Naive thymus-derived CD8-positive, alpha-beta T cell (primary cell): ENCODE measurements at regions of chr10 and their contacts with region 1.

Region 1: GRCh38 chr10:91923371-91924211 is at the start of gene BTAF1:
- DNase-seq: peak; percentile 85 to 96 (median 90)
- ATAC-seq: peak; percentile 93
- H3K4me3 Mint-ChIP-seq: peak within 1 kb of the TSS; percentile 88 to 100 (median 94)
- H3K27ac Mint-ChIP-seq: peak within 1 kb of the TSS; percentile 95 to 100 (median 98)
- H3K4me1 Mint-ChIP-seq: peaks cover 18 to 48% (median 41%) of the 10 kb centered on the region in 4 donors
- H3K27me3 Mint-ChIP-seq: peaks cover 1 to 10% (median 4%) of the 10 kb centered on the region in 5 donors
- polyA plus RNA-seq, gene BTAF1: 7.9 to 9.1 (median 8.6) TPM

Region 2: DNA sequence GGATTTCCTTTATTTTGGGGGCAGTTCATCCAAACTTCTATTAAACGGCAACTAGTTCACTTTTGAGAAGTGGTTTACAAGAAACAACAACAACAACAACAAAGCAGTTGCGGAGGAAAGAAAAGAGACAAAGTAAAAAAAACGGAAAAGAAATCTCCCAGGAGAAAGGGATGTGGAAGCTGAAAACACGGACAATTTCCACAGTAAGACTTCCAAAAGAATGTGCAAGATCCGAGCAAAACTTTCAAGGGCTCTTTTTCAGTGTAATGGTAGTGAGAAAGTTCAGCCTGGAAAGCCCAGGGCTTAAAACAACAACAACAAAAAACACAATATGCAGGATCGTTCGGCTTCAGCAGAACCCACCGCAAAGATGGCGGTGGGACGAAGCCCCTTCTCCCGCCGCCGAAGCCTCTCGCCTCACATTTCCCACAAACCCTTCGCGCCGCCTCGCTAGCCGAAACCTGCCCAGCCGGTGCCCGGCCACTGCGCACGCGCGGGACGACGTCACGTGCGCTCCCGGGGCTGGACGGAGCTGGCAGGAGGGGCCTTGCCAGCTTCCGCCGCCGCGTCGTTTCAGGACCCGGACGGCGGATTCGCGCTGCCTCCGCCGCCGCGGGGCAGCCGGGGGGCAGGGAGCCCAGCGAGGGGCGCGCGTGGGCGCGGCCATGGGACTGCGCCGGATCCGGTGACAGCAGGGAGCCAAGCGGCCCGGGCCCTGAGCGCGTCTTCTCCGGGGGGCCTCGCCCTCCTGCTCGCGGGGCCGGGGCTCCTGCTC is 125.5 kb before region 1 on chr10 and contains the start of gene TNKS2:
- POLR2A ChIA-PET with region 1: interaction called, 18 read pairs
- DNase-seq: peak; percentile 84 to 95 (median 92)
- ATAC-seq: peak; percentile 80
- H3K4me3 Mint-ChIP-seq: peak within 1 kb of the TSS; percentile 93 to 100 (median 98)
- H3K27ac Mint-ChIP-seq: peak within 1 kb of the TSS; percentile 92 to 99 (median 98)
- H3K4me1 Mint-ChIP-seq: peaks cover 31 to 68% (median 62%) of the 10 kb centered on the region in 4 donors
- H3K27me3 Mint-ChIP-seq: no peaks in the 10 kb centered on the region
- polyA plus RNA-seq, gene TNKS2: 15.2 to 25.4 (median 18.6) TPM

Region 3: DNA sequence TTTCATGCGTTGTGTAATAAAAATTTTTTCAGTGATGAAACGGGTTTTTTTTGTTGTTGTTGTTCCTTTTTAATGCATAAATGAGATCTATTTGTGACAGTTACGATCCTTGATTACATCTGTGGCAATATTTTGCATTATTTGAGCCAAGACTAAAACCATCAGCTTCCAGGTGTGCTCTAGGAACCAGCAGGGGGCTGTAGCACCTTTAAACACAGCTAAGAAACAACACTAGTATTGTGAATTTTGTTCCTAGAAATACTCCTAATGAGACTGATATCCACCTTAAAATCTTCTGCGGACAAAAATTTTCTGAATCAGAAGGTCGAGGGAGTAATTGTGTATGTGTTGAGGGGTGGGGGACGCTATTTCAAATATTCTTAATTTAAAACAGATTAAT is 67.0 kb before region 1 on chr10:
- POLR2A ChIA-PET with region 1: no interaction called
- DNase-seq: no peak
- ATAC-seq: no peak
- H3K4me3 Mint-ChIP-seq: no peak overlapping the region
- H3K27ac Mint-ChIP-seq: peak overlapping the region in 2 of 10 donors; percentile 40 to 83
- H3K4me1 Mint-ChIP-seq: no peaks in the 10 kb centered on the region
- H3K27me3 Mint-ChIP-seq: no peaks in the 10 kb centered on the region